CD4-positive, alpha-beta memory T cell (primary cell): ENCODE measurements at regions of chr2 and their contacts with region 1.

Region 1: GRCh38 chr2:69694894-69695849 is 46.8 kb upstream of the ANXA4 start:
- DNase-seq: no peak
- H3K4me3 ChIP-seq: no peak overlapping the region
- H3K4me3 Mint-ChIP-seq: peak overlapping the region in 6 of 8 donors; percentile 5 to 75 (median 61)
- H3K27ac ChIP-seq: no peak overlapping the region
- H3K27ac Mint-ChIP-seq: peak overlapping the region; percentile 47 to 97 (median 77)
- H3K4me1 ChIP-seq: peaks cover 88% of the 10 kb centered on the region
- H3K4me1 Mint-ChIP-seq: peaks cover 70 to 95% (median 80%) of the 10 kb centered on the region in 4 donors
- H3K27me3 ChIP-seq: no peaks in the 10 kb centered on the region
- H3K27me3 Mint-ChIP-seq: no peaks in the 10 kb centered on the region

Region 2: GRCh38 chr2:69652221-69652651 is 42.9 kb before region 1 on chr2:
- CTCF ChIA-PET with region 1: interaction called, 11 read pairs
- POLR2A ChIA-PET with region 1: interaction called, 217 read pairs
- intact Hi-C with region 1: loop called (anchors 1 kb)
- DNase-seq: no peak
- H3K4me3 ChIP-seq: no peak overlapping the region
- H3K4me3 Mint-ChIP-seq: peak overlapping the region in 5 of 8 donors; percentile 35 to 80 (median 52)
- H3K27ac ChIP-seq: no peak overlapping the region
- H3K27ac Mint-ChIP-seq: peak overlapping the region in 6 of 7 donors; percentile 26 to 84 (median 56)
- H3K4me1 ChIP-seq: peaks cover 56% of the 10 kb centered on the region
- H3K4me1 Mint-ChIP-seq: peaks cover 22 to 70% (median 45%) of the 10 kb centered on the region in 4 donors
- H3K27me3 ChIP-seq: no peaks in the 10 kb centered on the region
- H3K27me3 Mint-ChIP-seq: no peaks in the 10 kb centered on the region

Region 3: DNA sequence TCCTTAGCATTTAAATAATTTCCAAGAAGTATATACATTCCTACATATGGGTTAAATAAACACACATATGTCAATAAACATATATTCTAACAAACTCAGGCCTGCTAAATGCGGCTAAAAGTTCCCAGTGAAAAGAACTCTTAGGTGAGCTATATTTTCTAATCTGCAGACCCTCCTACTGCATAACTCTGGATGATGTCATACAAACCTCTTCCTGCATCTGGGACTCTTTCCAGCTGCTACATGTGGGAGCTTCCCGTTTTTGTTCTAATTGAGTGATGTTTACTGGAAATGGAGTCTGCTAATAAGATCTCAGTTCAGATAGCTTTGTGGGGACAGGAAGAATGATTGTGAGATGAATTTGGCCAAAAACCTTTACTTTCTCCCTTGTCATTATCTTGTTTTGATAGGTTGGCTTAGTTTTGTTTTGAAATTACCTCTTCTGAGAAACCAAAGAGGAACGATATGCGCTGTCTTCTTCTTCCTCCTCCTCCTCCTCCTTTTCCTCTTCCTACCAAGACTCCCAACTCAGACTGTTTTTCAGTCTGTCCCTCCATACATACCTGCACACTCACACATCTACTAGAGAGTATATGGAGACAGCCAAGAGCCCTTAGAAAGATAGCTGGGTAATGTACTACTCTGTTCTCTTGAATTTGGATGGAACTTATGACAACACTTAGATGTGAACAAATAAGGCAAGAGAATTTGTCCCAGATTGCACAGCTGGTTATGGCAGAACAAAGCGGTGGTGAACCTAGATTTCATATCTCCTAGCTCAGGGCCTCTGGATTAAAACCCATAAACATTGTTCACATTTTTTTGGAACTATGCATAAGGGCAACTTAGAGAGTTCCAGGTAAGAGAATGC is 11.8 kb before region 1 on chr2:
- CTCF ChIA-PET with region 1: interaction called, 3 read pairs
- POLR2A ChIA-PET with region 1: interaction called, 11 read pairs
- intact Hi-C with region 1: loop called (anchors 1 kb)
- DNase-seq: no peak
- H3K4me3 ChIP-seq: no peak overlapping the region
- H3K4me3 Mint-ChIP-seq: peak overlapping the region; percentile 51 to 81 (median 70)
- H3K27ac ChIP-seq: no peak overlapping the region
- H3K27ac Mint-ChIP-seq: peak overlapping the region; percentile 17 to 94 (median 76)
- H3K4me1 ChIP-seq: peaks cover 38% of the 10 kb centered on the region
- H3K4me1 Mint-ChIP-seq: peaks cover 33 to 66% (median 52%) of the 10 kb centered on the region in 4 donors
- H3K27me3 ChIP-seq: no peaks in the 10 kb centered on the region
- H3K27me3 Mint-ChIP-seq: no peaks in the 10 kb centered on the region

Region 4: DNA sequence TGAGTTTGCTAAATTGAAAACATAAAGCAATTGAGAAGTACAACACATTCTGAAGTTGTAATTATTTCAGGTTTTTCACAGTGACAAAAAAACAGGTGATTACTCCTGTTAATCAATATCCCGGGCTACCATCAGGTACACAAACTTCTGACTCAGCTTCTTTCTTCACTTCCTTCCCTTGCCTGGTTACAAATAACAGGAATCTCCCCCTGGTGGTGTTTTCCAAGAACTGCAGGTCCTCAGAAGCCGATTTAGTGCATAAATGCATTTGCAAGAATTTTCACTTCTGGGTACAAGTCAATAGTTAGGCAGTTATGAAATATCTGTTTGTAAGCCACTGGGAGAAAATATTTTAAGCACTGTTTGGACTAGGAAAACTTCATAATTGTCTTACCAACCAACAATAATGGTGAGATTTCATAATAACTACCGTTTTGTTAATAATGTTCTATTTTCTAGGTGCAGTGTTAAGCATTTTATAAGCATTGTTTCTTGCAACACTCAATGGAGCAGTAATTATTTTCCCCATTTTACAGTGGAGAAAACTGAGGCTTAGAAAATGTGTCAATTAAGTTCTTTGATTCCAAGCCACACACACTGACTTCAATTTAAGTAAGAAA is 121.9 kb after region 1 on chr2:
- CTCF ChIA-PET with region 1: no interaction called
- POLR2A ChIA-PET with region 1: no interaction called
- intact Hi-C with region 1: no loop called
- DNase-seq: peak; percentile 76 to 86 (median 80)
- H3K4me3 ChIP-seq: no peak overlapping the region
- H3K4me3 Mint-ChIP-seq: no peak overlapping the region
- H3K27ac ChIP-seq: no peak overlapping the region
- H3K27ac Mint-ChIP-seq: no peak overlapping the region
- H3K4me1 ChIP-seq: peaks cover 7% of the 10 kb centered on the region
- H3K4me1 Mint-ChIP-seq: peaks cover 3 to 5% (median 4%) of the 10 kb centered on the region in 4 donors
- H3K27me3 ChIP-seq: no peaks in the 10 kb centered on the region
- H3K27me3 Mint-ChIP-seq: no peaks in the 10 kb centered on the region

Region 5: DNA sequence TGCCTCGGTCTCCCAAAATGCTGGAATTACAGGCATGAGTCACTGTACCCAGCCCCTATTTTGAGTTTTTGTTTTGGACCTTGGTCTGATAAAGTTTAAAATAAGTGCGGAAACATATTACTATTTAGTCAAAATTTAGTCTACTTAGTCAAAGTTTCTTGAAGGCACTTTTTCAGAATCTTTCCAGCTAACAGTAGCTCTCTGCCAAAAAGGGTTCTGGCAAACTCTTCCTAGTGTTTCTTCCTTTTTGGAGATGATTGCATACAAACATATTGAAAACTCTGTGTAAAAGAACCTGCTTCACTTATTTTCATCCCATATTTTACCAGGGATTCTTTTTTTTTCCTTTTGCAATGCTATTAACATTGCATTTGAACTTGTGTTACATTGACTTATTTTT is 163.1 kb after region 1 on chr2:
- CTCF ChIA-PET with region 1: no interaction called
- POLR2A ChIA-PET with region 1: no interaction called
- intact Hi-C with region 1: no loop called
- DNase-seq: no peak
- H3K4me3 ChIP-seq: no peak overlapping the region
- H3K4me3 Mint-ChIP-seq: no peak overlapping the region
- H3K27ac ChIP-seq: no peak overlapping the region
- H3K27ac Mint-ChIP-seq: no peak overlapping the region
- H3K4me1 ChIP-seq: no peaks in the 10 kb centered on the region
- H3K4me1 Mint-ChIP-seq: peaks cover 0 to 4% (median 0%) of the 10 kb centered on the region in 4 donors
- H3K27me3 ChIP-seq: no peaks in the 10 kb centered on the region
- H3K27me3 Mint-ChIP-seq: no peaks in the 10 kb centered on the region

Region 6: GRCh38 chr2:70086278-70086837 is 391.2 kb after region 1 on chr2:
- CTCF ChIA-PET with region 1: no interaction called
- POLR2A ChIA-PET with region 1: no interaction called
- intact Hi-C with region 1: no loop called
- DNase-seq: peak; percentile 88 to 95 (median 93)
- H3K4me3 ChIP-seq: peak overlapping the region; percentile 64
- H3K4me3 Mint-ChIP-seq: peak overlapping the region; percentile 88 to 99 (median 94)
- H3K27ac ChIP-seq: peak overlapping the region; percentile 99
- H3K27ac Mint-ChIP-seq: peak overlapping the region; percentile 98 to 100 (median 100)
- H3K4me1 ChIP-seq: peaks cover 61% of the 10 kb centered on the region
- H3K4me1 Mint-ChIP-seq: peaks cover 41 to 86% (median 53%) of the 10 kb centered on the region in 4 donors
- H3K27me3 ChIP-seq: no peaks in the 10 kb centered on the region
- H3K27me3 Mint-ChIP-seq: peaks cover 3% of the 10 kb centered on the region in 2 donors